Activated T-helper 2 cell treated with anti-CD3 and anti-CD28 coated beads, Interferon-gamma antibody, Interleukin-2, Interleukin-4, amounts not matched to agents 10 μg/mL and 5 μg/mL and 100 μg/mL, durations not matched to agents 14 hours and 24 hours and 36 hours (primary cell): ENCODE measurements at regions of chr12 and their contacts with region 1.

Region 1: GRCh38 chr12:132761032-132761920 is at the start of gene ANKLE2:
- DNase-seq: peak; percentile 74
- H3K4me3 Mint-ChIP-seq: peak within 1 kb of the TSS; percentile 94
- H3K27ac Mint-ChIP-seq: peak within 1 kb of the TSS; percentile 97
- H3K4me1 Mint-ChIP-seq: peaks cover 19% of the 10 kb centered on the region
- H3K27me3 Mint-ChIP-seq: no peaks in the 10 kb centered on the region
- total RNA-seq, gene ANKLE2: 143 and 152 TPM in 2 replicates

Region 2: DNA sequence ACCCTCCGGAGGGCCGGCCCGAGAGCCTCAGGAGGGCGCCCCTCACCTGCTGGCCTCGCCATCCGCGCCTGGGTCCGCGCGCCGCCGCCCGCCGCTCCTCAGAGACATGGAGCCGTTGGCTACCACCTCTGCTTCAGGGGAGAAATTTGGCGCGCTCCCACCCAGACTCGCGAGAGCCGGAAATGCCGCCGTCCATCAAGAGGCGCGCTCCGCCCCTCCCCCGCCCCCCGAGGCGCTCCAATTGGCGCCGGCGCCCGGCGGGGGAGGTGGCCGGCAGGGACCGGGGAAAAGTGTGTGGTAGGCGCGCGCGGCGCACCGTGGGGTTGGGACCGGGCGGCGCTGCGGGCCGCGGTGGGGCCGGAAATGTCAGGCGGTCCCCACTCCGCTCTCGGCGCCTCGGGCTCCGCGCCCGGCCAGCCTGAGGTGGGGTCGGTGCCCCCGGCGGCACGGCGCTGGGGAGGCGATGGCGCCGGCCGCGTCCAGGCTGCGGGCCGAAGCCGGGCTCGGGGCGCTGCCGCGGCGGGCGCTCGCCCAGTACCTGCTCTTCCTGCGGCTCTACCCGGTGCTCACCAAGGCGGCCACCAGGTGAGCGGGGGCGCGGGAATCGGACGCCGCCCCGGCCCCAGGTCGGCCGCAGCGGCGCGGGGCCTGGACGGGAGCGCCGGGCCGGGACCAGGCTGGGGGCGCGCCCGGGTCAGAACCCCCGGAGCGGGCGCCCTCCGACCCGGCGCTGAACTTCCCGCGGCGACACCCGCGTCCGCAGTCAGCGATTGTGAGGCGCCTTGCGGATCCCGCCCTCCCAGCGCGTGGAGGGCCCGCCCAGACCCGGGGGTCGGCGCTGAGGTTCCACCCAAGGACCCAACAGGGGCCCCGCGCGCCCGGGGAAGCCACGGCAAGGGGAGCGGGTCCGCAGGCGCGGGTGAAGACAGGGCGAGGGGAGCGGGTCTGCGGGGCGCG is 73.8 kb before region 1 on chr12 and contains the starts of genes POLE and PXMP2:
- intact Hi-C with region 1: loop called (anchors 2 kb)
- DNase-seq: peak; percentile 90
- H3K4me3 Mint-ChIP-seq: peak within 1 kb of the TSS; percentile 82
- H3K27ac Mint-ChIP-seq: peak within 1 kb of the TSS; percentile 75
- H3K4me1 Mint-ChIP-seq: peaks cover 22% of the 10 kb centered on the region
- H3K27me3 Mint-ChIP-seq: no peaks in the 10 kb centered on the region
- total RNA-seq, gene POLE: 152 and 159 TPM in 2 replicates
- total RNA-seq, gene PXMP2: 19.1 and 23.2 TPM in 2 replicates

Region 3: DNA sequence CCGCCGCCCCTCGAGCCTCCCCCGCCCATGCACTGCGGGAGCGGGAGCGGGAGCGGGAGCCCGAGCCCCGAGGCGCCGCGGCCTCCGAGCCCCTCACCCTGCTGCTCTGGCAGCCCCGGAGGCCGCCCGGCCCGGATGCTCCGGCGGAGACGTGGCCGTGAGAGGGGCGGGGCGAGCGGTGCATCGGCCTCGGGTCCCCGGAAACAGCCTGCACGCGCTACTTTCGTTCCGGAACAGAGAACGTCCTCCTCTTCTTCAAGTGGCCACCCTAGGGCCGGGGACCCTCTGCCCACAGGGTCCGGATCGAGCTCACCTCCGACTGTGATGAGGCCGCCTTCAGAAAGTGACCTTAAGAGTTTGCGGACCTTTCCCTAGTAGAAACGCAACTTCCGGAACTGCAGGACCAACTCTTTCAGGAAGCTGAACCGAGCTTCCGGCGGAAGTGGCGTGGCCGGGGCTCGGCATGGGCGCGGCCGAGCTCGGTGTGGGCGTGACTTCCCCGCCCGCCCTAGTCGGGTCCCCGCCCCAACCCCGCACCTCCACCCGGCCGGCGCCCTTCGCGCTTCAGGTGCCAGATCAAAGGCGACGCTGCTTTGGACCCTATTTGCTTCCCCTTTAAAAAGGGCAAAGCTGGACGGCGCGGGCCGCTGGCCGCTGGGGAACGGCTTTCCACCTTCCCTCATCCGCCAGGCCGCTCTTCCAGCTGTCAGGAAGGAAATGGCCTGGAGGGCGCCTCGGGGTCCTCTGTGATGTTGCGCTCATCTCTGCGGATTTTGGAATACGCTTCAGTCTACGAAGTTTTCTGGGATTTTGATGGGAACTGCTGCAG is 67.6 kb after region 1 on chr12 and contains the start of gene GOLGA3:
- intact Hi-C with region 1: loop called (anchors 5 kb)
- DNase-seq: peak; percentile 89
- H3K4me3 Mint-ChIP-seq: peak within 1 kb of the TSS; percentile 98
- H3K27ac Mint-ChIP-seq: peak within 1 kb of the TSS; percentile 100
- H3K4me1 Mint-ChIP-seq: peaks cover 36% of the 10 kb centered on the region
- H3K27me3 Mint-ChIP-seq: no peaks in the 10 kb centered on the region
- total RNA-seq, gene GOLGA3: 64.5 and 66.2 TPM in 2 replicates

Region 4: DNA sequence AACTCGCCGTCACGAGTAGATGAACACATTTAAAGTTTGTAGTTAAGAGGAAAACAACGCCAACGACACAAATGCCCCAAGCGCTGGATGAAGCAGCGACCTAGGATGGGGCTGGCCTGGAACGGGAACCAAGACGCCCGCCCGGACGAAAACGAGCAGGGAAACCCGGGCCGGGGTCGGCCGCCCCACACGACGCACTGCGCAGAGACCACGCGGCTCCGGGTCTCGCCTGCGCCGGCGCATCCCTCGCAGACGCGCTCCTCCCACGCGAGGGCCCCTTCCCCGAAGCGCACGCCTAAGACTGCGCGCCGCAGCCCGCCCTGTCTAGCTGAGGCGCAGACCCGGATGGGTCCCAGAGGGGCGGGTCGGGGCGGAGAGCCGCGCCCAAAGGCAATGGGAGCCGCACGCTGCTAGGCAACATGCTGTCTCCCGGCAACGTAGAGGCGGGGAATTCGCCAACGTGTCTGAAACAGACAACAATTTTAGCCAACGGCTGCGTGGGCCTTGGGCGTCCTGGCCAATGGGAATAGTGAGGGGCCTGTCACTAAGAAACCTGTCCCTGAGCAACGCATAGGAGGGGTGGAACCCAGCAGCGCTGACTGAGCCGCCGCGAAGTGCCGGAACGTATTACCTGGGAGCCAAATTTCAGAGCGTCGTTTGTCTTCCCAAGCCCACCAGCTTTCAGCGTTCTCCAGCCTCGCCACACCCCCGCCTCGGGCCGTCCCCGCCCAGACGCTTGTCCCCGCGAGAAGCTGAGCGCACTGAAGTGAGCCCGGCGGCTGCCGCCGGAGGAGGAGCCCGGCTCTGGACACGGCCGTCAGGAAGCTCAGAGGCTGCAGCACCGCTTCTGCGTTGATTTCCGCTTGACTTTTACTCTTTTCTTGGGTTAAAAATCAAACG is 147.1 kb after region 1 on chr12:
- intact Hi-C with region 1: loop called (anchors 5 kb)
- DNase-seq: peak; percentile 93
- H3K4me3 Mint-ChIP-seq: peak overlapping the region; percentile 86
- H3K27ac Mint-ChIP-seq: peak overlapping the region; percentile 94
- H3K4me1 Mint-ChIP-seq: peaks cover 4% of the 10 kb centered on the region
- H3K27me3 Mint-ChIP-seq: peaks cover 13% of the 10 kb centered on the region

Region 5: DNA sequence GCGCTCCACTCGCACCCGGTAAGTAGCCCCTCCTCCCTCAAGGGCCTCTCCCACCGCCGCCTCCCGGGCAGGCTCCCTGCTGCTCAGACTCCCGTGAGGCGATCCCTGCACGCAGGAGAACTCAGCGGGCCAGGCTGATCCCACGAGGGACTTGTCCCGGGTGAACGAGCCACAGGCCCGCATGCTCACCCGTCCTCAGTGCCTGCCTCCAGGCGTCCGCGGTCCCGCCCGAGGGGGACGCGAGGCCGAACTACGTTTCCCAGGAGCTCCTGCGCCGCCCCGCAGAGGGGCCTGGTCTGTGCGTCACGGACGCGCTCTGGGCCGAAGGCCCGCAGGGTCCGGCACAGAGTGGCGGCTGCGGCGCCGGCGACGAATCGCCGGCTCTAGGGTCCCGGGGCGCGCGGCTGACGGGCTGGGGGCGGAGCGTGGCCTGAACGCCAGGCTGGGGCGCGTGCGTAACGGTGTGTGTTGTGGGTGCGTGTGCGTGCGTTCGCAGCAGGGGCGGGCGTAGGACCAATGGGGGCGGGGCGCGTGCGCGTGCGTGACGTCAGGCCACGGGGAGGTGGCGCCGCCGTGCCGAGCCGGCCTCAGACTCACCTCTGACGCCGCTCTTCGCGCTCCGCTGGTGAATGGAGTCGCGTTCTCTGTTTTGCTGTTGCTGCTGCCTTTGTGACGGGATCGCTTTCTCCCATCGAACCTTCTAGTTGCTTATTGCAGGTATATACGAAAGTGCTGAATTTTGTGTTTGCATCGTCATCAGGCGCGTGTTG is 368.9 kb after region 1 on chr12 and contains the starts of genes ZNF10 and ZNF891:
- intact Hi-C with region 1: loop called (anchors 2 kb)
- DNase-seq: peak; percentile 94
- H3K4me3 Mint-ChIP-seq: peak within 1 kb of the TSS; percentile 92
- H3K27ac Mint-ChIP-seq: peak within 1 kb of the TSS; percentile 99
- H3K4me1 Mint-ChIP-seq: peaks cover 11% of the 10 kb centered on the region
- H3K27me3 Mint-ChIP-seq: no peaks in the 10 kb centered on the region
- total RNA-seq, gene ZNF10: 4.9 and 6.3 TPM in 2 replicates
- total RNA-seq, gene ZNF891: 2.0 and 2.3 TPM in 2 replicates